ENCODE measurements at regions of chr5 and their contacts with region 1.

Region 1: DNA sequence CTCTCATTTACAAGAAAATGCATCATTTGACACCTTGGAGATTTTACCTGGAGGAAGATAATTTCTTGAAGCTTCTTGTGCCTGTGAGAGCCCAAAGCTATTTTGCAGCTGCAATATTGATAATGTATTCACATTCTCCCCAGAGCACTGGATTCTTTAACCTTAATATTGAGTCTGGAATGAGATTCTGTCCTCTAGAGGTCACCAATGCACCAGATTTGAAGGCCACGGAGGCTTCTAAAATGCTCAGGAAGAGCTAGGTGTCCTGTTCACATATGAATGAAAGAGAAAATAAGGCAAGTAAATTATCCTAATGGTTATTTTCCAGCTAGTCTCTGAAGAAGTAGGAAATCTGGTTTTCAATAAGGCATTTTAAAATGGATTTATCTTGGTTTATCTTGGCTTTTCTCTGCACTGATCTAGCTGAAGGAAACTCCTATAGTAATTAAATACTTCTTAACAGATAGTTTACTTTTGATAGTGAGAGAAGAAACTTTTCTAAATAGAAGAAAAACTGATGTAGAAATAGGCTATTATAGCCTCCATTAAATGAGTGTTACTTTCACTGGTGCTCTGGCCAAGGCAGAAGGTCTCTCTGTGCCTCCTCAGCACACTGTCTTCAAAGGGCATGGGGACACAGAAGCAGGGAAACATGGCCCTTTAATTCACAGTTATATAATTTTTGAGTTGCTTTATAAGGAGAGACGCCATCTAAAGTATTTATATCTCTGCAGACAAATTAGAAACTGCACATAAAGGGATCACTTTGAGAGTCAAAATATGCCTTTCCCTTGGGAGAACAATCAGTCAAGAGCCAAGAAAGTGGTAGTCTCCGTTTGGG is 297.0 kb upstream of the ACTBL2 start:
- DNase-seq: no peak
- H3K4me3 ChIP-seq: no peak overlapping the region
- H3K27me3 ChIP-seq: no peaks in the 10 kb centered on the region
- CTCF ChIP-seq: peak; percentile 71

Region 2: GRCh38 chr5:57887851-57888621 is 108.4 kb after region 1 on chr5:
- CTCF ChIA-PET with region 1: interaction called, 11 read pairs
- POLR2A ChIA-PET with region 1: no interaction called
- DNase-seq: no peak
- H3K4me3 ChIP-seq: no peak overlapping the region
- H3K27me3 ChIP-seq: no peaks in the 10 kb centered on the region
- CTCF ChIP-seq: peak; percentile 67

Measured in BJ (cell line).